ENCODE measurements at regions of chr18 and their contacts with region 1.

Region 1: GRCh38 chr18:58270396-58270795 is 226.4 kb downstream of the NEDD4L start:
- DNase-seq: no peak
- ATAC-seq: no peak
- H3K4me3 ChIP-seq: no peak overlapping the region
- H3K27ac ChIP-seq: no peak overlapping the region
- H3K4me1 ChIP-seq: peaks cover 4% of the 10 kb centered on the region; the same call in 1 of the 2 replicates
- H3K27me3 ChIP-seq: no peaks in the 10 kb centered on the region
- CTCF ChIP-seq: no peak
- EP300 ChIP-seq: no peak
- POLR2A ChIP-seq: no peak
- RAD21 ChIP-seq: no peak

Region 2: DNA sequence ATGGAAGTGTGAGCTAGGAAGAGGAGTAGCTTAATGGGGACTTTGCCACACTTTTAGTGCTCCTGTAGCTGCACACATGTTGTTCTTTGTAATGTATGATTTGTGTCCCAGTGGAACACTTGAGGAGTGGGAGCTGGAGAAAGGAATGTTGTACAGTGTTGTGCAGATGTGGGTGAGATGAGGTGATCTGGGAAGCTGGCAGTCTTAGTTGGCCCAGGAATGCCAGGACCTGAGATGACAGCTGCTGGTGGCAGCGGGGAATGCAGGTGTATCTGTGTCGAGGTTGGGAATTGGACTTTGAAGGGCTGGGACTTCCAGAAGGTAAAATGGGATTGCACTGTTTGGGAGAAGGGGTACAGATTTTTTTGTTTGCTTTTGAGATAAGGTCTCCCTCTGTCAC is 202.8 kb before region 1 on chr18:
- CTCF ChIA-PET with region 1: no interaction called
- POLR2A ChIA-PET with region 1: no interaction called
- RAD21 ChIA-PET with region 1: no interaction called
- SMC1A ChIA-PET with region 1: no interaction called
- in situ Hi-C with region 1: no loop called
- intact Hi-C with region 1: no loop called
- DNase-seq: no peak
- ATAC-seq: no peak
- H3K4me3 ChIP-seq: no peak overlapping the region
- H3K27ac ChIP-seq: no peak overlapping the region
- H3K4me1 ChIP-seq: no peaks in the 10 kb centered on the region
- H3K27me3 ChIP-seq: no peaks in the 10 kb centered on the region
- CTCF ChIP-seq: no peak
- EP300 ChIP-seq: no peak
- POLR2A ChIP-seq: no peak
- RAD21 ChIP-seq: no peak

Region 3: GRCh38 chr18:58288922-58289797 is 18.8 kb after region 1 on chr18:
- CTCF ChIA-PET with region 1: interaction called, 6 read pairs
- POLR2A ChIA-PET with region 1: interaction called, 4 read pairs
- RAD21 ChIA-PET with region 1: interaction called, 4 read pairs
- SMC1A ChIA-PET with region 1: interaction called, 10 read pairs
- in situ Hi-C with region 1: no loop called
- intact Hi-C with region 1: no loop called
- DNase-seq: no peak
- ATAC-seq: peak; percentile 90
- H3K4me3 ChIP-seq: no peak overlapping the region
- H3K27ac ChIP-seq: no peak overlapping the region
- H3K4me1 ChIP-seq: peaks cover 12% of the 10 kb centered on the region; the same call in 1 of the 2 replicates
- H3K27me3 ChIP-seq: no peaks in the 10 kb centered on the region
- CTCF ChIP-seq: no peak
- EP300 ChIP-seq: no peak
- POLR2A ChIP-seq: no peak
- RAD21 ChIP-seq: no peak